PC-3 (cell line): ENCODE measurements at regions of chr10 and their contacts with region 1.

Region 1: DNA sequence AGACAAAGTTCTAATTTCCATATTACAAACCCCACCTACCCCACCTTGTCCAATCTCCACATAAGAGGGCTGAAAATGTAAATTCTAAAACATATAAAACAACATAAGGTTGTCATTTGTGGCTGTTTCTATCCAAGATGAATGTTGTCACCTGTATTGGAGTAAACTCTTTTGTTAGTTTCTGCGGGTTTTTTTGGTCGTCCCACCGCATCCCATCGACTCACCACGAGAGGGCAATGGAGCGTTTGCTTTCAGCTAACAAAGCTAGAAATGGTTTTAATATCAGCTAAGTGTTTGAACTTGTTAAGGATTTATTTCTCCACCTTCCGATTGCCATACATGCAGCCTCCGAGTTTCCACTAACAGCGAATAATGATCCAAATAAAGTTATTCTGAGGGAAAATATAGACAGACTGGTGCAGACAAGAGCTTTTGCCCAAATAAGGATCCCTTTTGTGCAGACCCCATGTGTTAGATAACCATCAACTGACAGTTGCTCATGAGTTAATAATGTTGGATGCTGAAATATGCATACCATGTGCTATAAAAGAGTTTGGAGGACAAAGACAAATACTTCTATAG is 137.2 kb downstream of the ARID5B start:
- DNase-seq: peak; percentile 100
- ATAC-seq: peak; percentile 50
- H3K4me3 ChIP-seq: peak overlapping the region; percentile 46
- H3K27ac ChIP-seq: peak overlapping the region; percentile 85
- H3K4me1 ChIP-seq: peaks cover 54% of the 10 kb centered on the region
- H3K27me3 ChIP-seq: no peaks in the 10 kb centered on the region
- CTCF ChIP-seq: peak; percentile 100

Region 2: DNA sequence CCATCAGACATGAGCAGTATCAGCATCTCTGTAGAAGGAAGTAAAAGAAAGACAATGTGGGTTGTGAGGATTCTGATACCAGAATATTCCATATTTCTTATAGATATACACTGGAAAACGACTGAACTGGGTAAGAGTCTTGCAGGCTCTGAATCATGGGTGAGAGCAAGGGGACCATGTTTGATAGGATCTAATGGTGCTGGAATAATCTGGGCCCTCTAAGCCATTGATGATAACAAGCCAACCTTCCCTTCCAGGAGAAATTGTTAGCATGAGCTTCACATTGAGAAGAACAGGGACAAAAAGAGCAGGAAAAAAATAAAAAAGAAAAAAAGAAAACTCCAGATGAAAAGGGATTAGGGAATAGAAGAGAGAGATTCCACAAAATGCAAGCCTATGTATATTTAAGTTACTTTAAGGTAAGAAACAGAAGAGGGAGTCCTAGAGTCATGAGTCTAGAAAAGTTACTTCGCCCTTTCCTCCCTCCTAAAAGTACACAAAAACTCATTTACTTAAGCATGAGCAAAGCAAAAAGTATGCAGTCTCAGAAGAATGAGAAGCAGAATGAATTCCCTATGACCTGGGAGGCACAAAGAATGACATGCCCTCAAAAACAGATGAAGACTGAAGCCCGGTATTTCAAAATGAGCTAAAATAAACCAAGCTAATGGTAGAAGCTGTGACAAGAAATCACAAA is 767.4 kb before region 1 on chr10:
- CTCF ChIA-PET with region 1: no interaction called
- POLR2A ChIA-PET with region 1: no interaction called
- intact Hi-C with region 1: loop called (anchors 1 kb)
- DNase-seq: peak; percentile 100
- ATAC-seq: peak; percentile 100
- H3K4me3 ChIP-seq: peak overlapping the region; percentile 3; the same call in 1 of the 2 replicates
- H3K27ac ChIP-seq: peak overlapping the region; percentile 1; the same call in 1 of the 2 replicates
- H3K4me1 ChIP-seq: peaks cover 14% of the 10 kb centered on the region
- H3K27me3 ChIP-seq: no peaks in the 10 kb centered on the region
- CTCF ChIP-seq: peak; percentile 99

Region 3: DNA sequence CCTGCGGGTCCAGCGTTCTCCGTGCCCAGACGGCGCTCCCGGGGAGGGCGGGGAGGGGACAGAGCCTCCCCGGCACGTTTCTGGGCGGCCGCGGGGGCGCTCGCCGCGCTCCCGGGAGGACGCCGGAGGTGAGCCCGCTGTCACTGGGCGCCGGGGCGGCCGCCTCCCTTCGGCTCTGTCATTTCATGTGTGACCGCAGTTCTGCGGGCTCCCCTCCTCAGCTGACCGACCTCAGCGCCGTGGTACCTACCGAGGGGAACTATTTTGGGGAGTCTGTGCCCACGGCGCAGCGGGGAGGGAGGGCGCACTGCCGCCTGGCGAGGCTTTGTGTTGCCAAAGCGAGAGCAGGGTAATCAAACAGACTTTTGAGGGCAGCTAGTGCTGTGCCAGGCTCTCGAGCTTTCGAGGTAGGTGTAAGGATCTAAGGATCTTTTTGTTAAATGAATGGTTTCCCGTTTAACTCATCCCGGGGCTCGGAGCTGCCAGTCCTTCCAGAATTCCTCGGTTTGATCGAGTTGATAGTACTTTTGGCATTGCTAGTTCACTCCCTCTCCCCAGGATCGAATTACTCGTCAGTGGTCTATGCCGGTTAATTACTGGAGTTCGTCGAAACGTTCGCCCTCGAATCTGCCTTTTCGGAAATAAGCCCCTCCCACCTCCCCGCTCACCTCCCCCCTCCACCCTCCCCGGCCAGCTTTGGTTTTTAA is 135.3 kb before region 1 on chr10:
- CTCF ChIA-PET with region 1: interaction called, 62 read pairs
- POLR2A ChIA-PET with region 1: interaction called, 25 read pairs
- intact Hi-C with region 1: loop called (anchors 1 kb)
- DNase-seq: peak; percentile 78
- ATAC-seq: peak; percentile 30
- H3K4me3 ChIP-seq: peak overlapping the region; percentile 75
- H3K27ac ChIP-seq: peak overlapping the region; percentile 52
- H3K4me1 ChIP-seq: peaks cover 30% of the 10 kb centered on the region
- H3K27me3 ChIP-seq: no peaks in the 10 kb centered on the region
- CTCF ChIP-seq: peak; percentile 66

Region 4: DNA sequence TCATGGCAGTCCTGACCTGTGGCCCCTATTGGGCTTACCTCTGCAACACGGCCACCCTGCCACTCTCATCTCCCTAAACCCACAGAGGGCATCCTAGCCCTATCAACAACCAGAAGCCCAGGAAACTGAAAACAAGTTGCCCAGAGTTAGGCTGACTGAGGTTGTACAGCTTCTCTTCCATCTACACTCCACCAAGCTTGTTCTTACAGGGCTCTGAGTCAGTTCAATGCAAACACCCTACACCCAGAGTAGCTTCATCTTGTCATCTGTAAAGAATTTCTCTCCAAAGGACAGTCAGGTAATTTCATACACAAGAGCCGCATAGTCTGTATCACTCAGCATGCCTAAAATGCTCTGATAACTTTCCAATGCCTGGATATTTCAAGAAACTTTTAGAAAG is 38.2 kb after region 1 on chr10:
- CTCF ChIA-PET with region 1: interaction called, 27 read pairs
- POLR2A ChIA-PET with region 1: interaction called, 4 read pairs
- intact Hi-C with region 1: loop called (anchors 1 kb)
- DNase-seq: peak; percentile 100
- ATAC-seq: peak; percentile 99
- H3K4me3 ChIP-seq: peak overlapping the region; percentile 31
- H3K27ac ChIP-seq: peak overlapping the region; percentile 61
- H3K4me1 ChIP-seq: peaks cover 45% of the 10 kb centered on the region
- H3K27me3 ChIP-seq: no peaks in the 10 kb centered on the region
- CTCF ChIP-seq: peak; percentile 95

Region 5: GRCh38 chr10:62153191-62153590 is 114.5 kb after region 1 on chr10:
- CTCF ChIA-PET with region 1: no interaction called
- POLR2A ChIA-PET with region 1: no interaction called
- intact Hi-C with region 1: loop called (anchors 1 kb)
- DNase-seq: peak; percentile 97
- ATAC-seq: peak; percentile 77
- H3K4me3 ChIP-seq: no peak overlapping the region
- H3K27ac ChIP-seq: peak overlapping the region; percentile 59
- H3K4me1 ChIP-seq: peaks cover 18% of the 10 kb centered on the region
- H3K27me3 ChIP-seq: no peaks in the 10 kb centered on the region
- CTCF ChIP-seq: no peak

Region 6: GRCh38 chr10:62268399-62269114 is 229.9 kb after region 1 on chr10 and contains the start of gene RTKN2:
- CTCF ChIA-PET with region 1: interaction called, 6 read pairs
- POLR2A ChIA-PET with region 1: no interaction called
- intact Hi-C with region 1: loop called (anchors 1 kb)
- DNase-seq: peak; percentile 100
- ATAC-seq: peak; percentile 81
- H3K4me3 ChIP-seq: peak within 1 kb of the TSS; percentile 75
- H3K27ac ChIP-seq: peak within 1 kb of the TSS; percentile 12
- H3K4me1 ChIP-seq: peaks cover 45% of the 10 kb centered on the region
- H3K27me3 ChIP-seq: no peaks in the 10 kb centered on the region
- CTCF ChIP-seq: no peak
- total RNA-seq, gene RTKN2: 24.8 and 26.6 TPM in 2 replicates

Region 7: GRCh38 chr10:62816331-62817120 is 777.8 kb after region 1 on chr10 and contains the start of gene EGR2:
- CTCF ChIA-PET with region 1: interaction called, 8 read pairs
- POLR2A ChIA-PET with region 1: no interaction called
- intact Hi-C with region 1: loop called (anchors 5 kb)
- DNase-seq: peak; percentile 100
- ATAC-seq: peak; percentile 76
- H3K4me3 ChIP-seq: peak within 1 kb of the TSS; percentile 69
- H3K27ac ChIP-seq: peak within 1 kb of the TSS; percentile 37
- H3K4me1 ChIP-seq: peaks cover 22% of the 10 kb centered on the region
- H3K27me3 ChIP-seq: no peaks in the 10 kb centered on the region
- CTCF ChIP-seq: no peak; the same call in 1 of the 2 replicates
- total RNA-seq, gene EGR2: 2.7 and 2.8 TPM in 2 replicates